ENCODE measurements at regions of chr11 and their contacts with region 1.

Region 1: GRCh38 chr11:18395735-18396504 is 1.6 kb downstream of the LDHA start:
- H3K4me3 ChIP-seq: peak overlapping the region; percentile 84
- H3K27ac ChIP-seq: peak overlapping the region; percentile 87
- H3K4me1 ChIP-seq: no peaks in the 10 kb centered on the region; the same call in 1 of the 2 replicates
- CTCF ChIP-seq: no peak

Region 2: GRCh38 chr11:18321980-18322711 is 73.8 kb before region 1 on chr11 and contains the starts of genes GTF2H1 and HPS5:
- CTCF ChIA-PET with region 1: interaction called, 3 read pairs
- POLR2A ChIA-PET with region 1: interaction called, 30 read pairs
- H3K4me3 ChIP-seq: peak within 1 kb of the TSS; percentile 100
- H3K27ac ChIP-seq: peak within 1 kb of the TSS; percentile 69
- H3K4me1 ChIP-seq: no peaks in the 10 kb centered on the region
- CTCF ChIP-seq: no peak

Region 3: DNA sequence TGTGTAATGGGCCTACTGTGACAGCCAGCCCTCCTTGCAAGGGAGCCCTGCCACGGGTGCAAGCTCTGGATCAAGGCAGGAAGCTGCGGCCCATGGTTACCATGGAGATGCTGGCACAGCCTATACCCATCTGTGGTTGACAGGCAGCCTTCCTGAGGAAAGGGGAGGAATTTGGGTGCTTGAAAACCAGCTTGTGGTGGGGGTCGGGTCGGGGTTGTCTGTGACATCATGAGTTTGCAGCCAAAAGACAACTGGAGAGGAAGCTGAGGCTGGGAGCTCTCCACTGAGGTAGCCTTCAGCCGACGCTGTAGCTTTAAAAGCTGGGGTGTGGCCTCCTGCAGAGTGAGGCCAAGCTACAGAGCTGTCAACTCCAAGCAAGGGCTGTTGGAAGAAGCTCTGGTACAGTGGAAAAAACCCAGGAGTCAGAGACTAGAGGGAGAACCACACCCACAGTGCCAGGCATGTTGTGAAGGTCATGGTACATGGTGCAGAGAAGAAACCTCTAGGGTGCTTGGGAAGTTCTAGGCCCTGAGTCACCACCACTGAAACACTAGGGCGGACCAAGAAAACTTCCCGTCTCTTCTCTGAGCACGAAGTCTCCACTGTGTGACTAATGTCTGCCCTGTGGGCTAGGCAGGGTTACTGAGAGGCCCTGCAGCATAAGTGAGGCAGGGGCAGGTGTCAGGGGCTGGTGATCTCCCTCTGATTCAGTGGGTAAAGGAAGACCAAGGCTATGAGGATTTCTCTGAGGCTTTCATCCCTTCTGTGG is 12.3 kb before region 1 on chr11:
- CTCF ChIA-PET with region 1: interaction called, 4 read pairs
- POLR2A ChIA-PET with region 1: interaction called, 86 read pairs
- H3K4me3 ChIP-seq: no peak overlapping the region
- H3K27ac ChIP-seq: peak overlapping the region; percentile 63
- H3K4me1 ChIP-seq: peaks cover 7% of the 10 kb centered on the region; the same call in 1 of the 2 replicates
- CTCF ChIP-seq: no peak

Region 4: GRCh38 chr11:18408558-18409242 is 12.8 kb after region 1 on chr11:
- CTCF ChIA-PET with region 1: interaction called, 12 read pairs
- POLR2A ChIA-PET with region 1: interaction called, 93 read pairs
- H3K4me3 ChIP-seq: no peak overlapping the region
- H3K27ac ChIP-seq: no peak overlapping the region
- H3K4me1 ChIP-seq: no peaks in the 10 kb centered on the region
- CTCF ChIP-seq: no peak

Region 5: GRCh38 chr11:18479063-18479462 is 83.1 kb after region 1 on chr11:
- CTCF ChIA-PET with region 1: no interaction called
- POLR2A ChIA-PET with region 1: no interaction called
- H3K4me3 ChIP-seq: no peak overlapping the region
- H3K27ac ChIP-seq: no peak overlapping the region
- H3K4me1 ChIP-seq: no peaks in the 10 kb centered on the region
- CTCF ChIP-seq: no peak

Region 6: DNA sequence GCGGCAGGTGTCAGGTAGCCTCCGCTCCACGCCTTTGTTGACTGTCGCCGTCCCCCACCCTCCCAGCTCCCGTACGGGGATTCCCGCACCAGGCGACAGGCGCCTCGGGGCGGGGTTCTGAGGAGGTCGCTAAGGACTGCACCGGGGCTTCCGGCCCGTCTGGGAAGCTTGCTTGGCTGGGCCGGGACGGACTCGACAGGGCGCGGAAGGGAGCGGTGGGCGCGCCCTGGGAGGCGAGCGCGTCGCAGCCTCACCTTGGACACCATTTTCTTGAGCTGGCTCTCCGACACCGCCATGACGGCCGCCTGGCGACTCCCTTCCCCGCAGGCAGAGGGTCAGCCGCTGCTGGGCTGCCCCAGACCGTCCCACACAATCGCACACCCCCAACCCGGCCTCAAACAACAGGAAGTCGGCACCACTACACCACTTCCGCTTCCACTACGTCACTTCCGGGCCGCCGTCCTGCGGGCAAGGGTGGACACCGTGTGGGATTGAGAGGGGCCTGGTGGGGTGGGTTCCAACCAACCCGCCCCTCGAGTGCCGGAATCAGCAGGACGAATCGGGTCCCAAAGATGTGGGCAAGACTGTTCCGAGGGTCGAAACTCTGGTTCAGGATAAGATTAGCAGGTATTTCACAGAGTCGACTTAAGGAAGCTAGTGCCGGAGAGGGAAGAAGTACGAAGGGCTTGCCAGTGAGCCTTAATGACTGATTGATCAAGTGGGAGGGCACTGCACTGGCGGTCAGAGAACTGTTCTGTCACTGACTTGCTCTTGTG is 130.8 kb after region 1 on chr11 and contains the start of gene TSG101:
- CTCF ChIA-PET with region 1: no interaction called
- POLR2A ChIA-PET with region 1: interaction called, 34 read pairs
- H3K4me3 ChIP-seq: peak within 1 kb of the TSS; percentile 94
- H3K27ac ChIP-seq: peak within 1 kb of the TSS; percentile 76
- H3K4me1 ChIP-seq: peaks cover 2% of the 10 kb centered on the region; the same call in 1 of the 2 replicates
- CTCF ChIP-seq: no peak

Region 7: GRCh38 chr11:18634140-18635032 is 238.5 kb after region 1 on chr11 and contains the start of gene SPTY2D1:
- CTCF ChIA-PET with region 1: no interaction called
- POLR2A ChIA-PET with region 1: interaction called, 21 read pairs
- H3K4me3 ChIP-seq: peak within 1 kb of the TSS; percentile 91
- H3K27ac ChIP-seq: peak within 1 kb of the TSS; percentile 73
- H3K4me1 ChIP-seq: no peaks in the 10 kb centered on the region
- CTCF ChIP-seq: no peak

Measured in HEK293 (cell line).